ENCODE measurements at regions of chr4 and their contacts with region 1.

Region 1: DNA sequence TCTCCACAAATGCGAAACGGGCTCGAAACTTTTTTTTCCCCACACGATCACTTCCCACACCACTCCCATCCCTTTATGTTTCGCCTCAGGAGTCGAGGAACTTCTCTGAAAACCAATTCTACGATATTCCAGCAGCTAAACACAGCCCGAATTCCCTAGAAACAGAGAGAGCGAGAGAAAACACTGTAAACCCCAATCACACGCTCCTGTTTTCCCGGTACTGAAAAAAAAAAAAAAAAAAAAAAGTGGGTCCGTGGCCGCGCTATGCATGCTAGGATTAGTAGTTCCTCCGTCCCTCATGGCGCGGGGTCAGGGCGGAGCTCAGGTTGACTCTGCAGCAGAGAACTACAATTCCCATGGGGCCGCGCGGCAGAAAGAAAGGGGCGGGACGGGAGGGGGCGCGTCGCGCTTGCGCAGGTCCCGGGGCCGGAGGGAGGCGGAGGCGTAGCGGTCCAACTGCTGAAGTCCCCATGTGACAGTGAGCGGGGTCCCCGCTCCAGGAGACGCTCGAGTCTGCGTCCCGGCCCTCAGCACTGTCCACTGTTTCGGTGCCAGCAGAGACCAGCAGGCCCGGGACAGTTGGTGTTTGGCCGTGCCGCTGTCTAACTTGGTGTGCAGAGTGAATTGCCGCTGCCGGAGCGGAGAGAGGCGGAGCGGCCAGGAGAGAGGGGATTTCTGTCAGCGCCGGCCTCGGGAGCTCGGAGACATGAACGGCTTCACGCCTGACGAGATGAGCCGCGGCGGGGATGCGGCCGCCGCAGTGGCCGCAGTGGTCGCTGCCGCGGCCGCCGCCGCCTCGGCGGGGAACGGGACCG is at the start of gene SAP30:
- DNase-seq: peak; percentile 99
- ATAC-seq: peak; percentile 95 to 99 (median 96)
- H3K4me3 ChIP-seq: peak within 1 kb of the TSS; percentile 64 to 94 (median 80)
- H3K27ac ChIP-seq: peak within 1 kb of the TSS; percentile 89 to 98 (median 95)
- H3K4me1 ChIP-seq: peaks cover 0 to 60% (median 39%) of the 10 kb centered on the region in 9 donors
- H3K27me3 ChIP-seq: no peaks in the 10 kb centered on the region
- CTCF ChIP-seq: no peak
- total RNA-seq, gene SAP30: 9.2 to 22.2 (median 12.3) TPM

Region 2: GRCh38 chr4:172725581-172725980 is 645.1 kb before region 1 on chr4:
- intact Hi-C with region 1: no loop called
- DNase-seq: no peak
- ATAC-seq: no peak
- H3K4me3 ChIP-seq: no peak overlapping the region
- H3K27ac ChIP-seq: no peak overlapping the region
- H3K4me1 ChIP-seq: no peaks in the 10 kb centered on the region
- H3K27me3 ChIP-seq: no peaks in the 10 kb centered on the region
- CTCF ChIP-seq: no peak

Region 3: DNA sequence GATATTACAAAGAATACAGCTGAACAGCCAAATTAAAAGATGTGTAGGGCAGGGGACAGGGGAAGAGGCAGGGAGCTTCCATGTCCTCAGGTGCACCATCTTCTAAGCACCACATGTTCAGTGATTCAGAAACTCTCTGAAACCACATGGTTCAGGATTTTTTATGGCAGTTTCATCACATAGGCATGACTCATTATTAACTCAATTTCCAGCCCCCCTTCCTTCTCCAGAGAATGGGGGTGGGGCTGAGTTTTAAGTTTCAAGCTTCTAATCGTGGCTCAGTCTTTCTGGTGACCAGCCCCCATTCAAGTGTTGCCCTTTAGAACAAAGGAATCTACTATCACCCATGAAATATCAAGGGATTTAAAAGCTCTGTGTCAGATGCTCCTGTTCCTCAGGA is 519.8 kb before region 1 on chr4:
- intact Hi-C with region 1: no loop called
- DNase-seq: no peak
- ATAC-seq: no peak
- H3K4me3 ChIP-seq: no peak overlapping the region
- H3K27ac ChIP-seq: no peak overlapping the region
- H3K4me1 ChIP-seq: no peaks in the 10 kb centered on the region
- H3K27me3 ChIP-seq: no peaks in the 10 kb centered on the region
- CTCF ChIP-seq: no peak

Region 4: GRCh38 chr4:173288296-173288695 is 82.4 kb before region 1 on chr4:
- intact Hi-C with region 1: no loop called
- DNase-seq: peak in 1 of 2 donors; percentile 80
- ATAC-seq: peak in 7 of 8 donors; percentile 33 to 79 (median 63)
- H3K4me3 ChIP-seq: peak overlapping the region in 2 of 10 donors; percentile 33 to 37
- H3K27ac ChIP-seq: no peak overlapping the region
- H3K4me1 ChIP-seq: peaks cover 0 to 9% (median 0%) of the 10 kb centered on the region in 9 donors
- H3K27me3 ChIP-seq: no peaks in the 10 kb centered on the region
- CTCF ChIP-seq: peak; percentile 22 to 78 (median 63)

Region 5: DNA sequence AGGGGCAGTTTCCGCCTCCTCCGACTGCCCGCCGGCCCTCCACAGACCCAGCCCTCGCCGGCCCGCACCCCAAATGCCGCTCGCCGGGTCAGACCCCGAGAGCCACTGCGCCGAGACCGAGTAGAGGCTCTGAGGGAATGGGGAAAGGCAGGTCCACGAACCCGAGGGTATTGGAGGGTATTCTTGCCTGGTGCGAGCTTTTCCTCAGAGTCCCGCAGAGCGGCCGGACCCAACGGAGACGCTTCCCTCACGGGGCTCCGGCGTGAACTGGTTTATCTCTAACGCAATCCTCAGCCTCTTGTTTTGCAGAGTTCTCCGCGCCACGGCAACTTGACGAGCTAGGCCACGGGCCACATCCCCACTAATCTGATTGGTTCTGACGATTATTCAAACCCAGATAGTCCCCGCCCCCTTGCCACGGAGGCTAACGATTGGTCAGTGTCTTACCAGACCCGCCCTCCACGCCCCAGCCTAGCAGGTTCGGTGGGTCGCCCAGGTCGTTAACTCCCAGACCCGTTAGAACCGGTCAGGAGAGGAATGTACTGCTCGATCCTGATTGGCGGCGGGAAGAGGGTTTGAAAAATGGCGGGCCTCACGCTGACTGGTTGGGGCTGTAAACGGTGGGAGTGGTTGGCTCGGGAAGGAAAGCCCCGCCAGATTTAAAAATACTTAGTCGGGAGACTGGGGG is 36.5 kb before region 1 on chr4 and contains the start of gene HMGB2:
- intact Hi-C with region 1: loop called in 9 of 10 experiments (anchors 1 to 5 kb)
- DNase-seq: peak; percentile 99 to 100
- ATAC-seq: peak; percentile 97 to 100 (median 98)
- H3K4me3 ChIP-seq: peak within 1 kb of the TSS; percentile 69 to 100 (median 92)
- H3K27ac ChIP-seq: peak within 1 kb of the TSS; percentile 92 to 100 (median 98)
- H3K4me1 ChIP-seq: peaks cover 12 to 40% (median 26%) of the 10 kb centered on the region in 9 donors
- H3K27me3 ChIP-seq: no peaks in the 10 kb centered on the region
- CTCF ChIP-seq: no peak
- total RNA-seq, gene HMGB2: 27.3 to 82.6 (median 49.8) TPM

Region 6: GRCh38 chr4:173413036-173413435 is 42.4 kb after region 1 on chr4:
- intact Hi-C with region 1: loop called in 5 of 10 experiments (anchors 2 to 5 kb)
- DNase-seq: no peak
- ATAC-seq: peak in 1 of 8 donors; percentile 42
- H3K4me3 ChIP-seq: no peak overlapping the region
- H3K27ac ChIP-seq: peak overlapping the region in 1 of 10 donors; percentile 17
- H3K4me1 ChIP-seq: peaks cover 0 to 76% (median 0%) of the 10 kb centered on the region in 9 donors
- H3K27me3 ChIP-seq: no peaks in the 10 kb centered on the region
- CTCF ChIP-seq: no peak